ENCODE measurements at regions of chr12 and their contacts with region 1.

Region 1: DNA sequence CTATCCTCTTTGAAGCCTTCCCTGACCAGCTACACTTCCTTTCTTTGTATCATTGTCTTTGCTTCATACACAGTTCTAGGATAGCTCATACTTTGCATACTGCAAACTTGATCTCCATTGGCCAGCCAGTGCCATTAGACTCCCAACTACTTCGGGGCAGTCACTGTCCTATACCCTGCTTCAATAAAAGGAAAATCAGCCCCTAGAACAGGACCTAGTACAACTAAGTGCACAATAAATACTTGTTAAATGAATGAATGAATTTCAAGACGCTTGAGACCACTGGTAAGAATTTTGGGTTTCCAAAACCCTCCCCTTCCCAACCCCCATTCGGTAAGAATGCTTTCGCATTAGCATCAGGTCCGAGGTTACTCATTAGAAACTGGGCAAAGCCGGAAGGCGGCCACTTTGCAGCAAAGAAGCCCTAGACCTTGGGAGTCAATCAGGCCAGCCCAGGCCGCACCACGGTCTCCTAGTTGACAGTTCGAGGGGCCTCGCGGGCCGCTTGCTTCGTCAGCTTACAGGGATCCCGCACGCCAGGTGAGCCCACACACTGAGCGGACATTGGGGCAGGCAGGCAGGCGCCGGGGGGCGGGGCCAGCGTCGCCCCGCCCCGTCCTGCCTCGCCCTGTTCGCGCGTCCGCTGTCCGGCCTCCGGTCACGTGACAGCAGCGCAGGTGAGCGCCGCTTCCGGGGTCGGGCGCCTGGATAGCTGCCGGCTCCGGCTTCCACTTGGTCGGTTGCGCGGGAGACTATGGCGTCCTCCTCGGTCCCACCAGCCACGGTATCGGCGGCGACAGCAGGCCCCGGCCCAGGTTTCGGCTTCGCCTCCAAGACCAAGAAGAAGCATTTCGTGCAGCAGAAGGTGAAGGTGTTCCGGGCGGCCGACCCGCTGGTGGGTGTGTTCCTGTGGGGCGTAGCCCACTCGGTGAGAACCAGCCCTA is at the start of gene PIP4K2C:
- DNase-seq: peak; percentile 28 to 93 (median 74)
- ATAC-seq: peak; percentile 87
- H3K4me3 ChIP-seq: peak within 1 kb of the TSS; percentile 61 to 97
- H3K4me3 Mint-ChIP-seq: peak within 1 kb of the TSS; percentile 85
- H3K27ac ChIP-seq: peak within 1 kb of the TSS; percentile 55 to 79
- H3K27ac Mint-ChIP-seq: peak within 1 kb of the TSS; percentile 83
- H3K4me1 ChIP-seq: peaks cover 23% of the 10 kb centered on the region
- H3K4me1 Mint-ChIP-seq: peaks cover 32% of the 10 kb centered on the region
- H3K27me3 ChIP-seq: peaks cover 0 to 5% of the 10 kb centered on the region in 2 experiments
- H3K27me3 Mint-ChIP-seq: no peaks in the 10 kb centered on the region
- CTCF ChIP-seq: no peak
- total RNA-seq, gene PIP4K2C: 16.4 to 20.1 TPM

Region 2: DNA sequence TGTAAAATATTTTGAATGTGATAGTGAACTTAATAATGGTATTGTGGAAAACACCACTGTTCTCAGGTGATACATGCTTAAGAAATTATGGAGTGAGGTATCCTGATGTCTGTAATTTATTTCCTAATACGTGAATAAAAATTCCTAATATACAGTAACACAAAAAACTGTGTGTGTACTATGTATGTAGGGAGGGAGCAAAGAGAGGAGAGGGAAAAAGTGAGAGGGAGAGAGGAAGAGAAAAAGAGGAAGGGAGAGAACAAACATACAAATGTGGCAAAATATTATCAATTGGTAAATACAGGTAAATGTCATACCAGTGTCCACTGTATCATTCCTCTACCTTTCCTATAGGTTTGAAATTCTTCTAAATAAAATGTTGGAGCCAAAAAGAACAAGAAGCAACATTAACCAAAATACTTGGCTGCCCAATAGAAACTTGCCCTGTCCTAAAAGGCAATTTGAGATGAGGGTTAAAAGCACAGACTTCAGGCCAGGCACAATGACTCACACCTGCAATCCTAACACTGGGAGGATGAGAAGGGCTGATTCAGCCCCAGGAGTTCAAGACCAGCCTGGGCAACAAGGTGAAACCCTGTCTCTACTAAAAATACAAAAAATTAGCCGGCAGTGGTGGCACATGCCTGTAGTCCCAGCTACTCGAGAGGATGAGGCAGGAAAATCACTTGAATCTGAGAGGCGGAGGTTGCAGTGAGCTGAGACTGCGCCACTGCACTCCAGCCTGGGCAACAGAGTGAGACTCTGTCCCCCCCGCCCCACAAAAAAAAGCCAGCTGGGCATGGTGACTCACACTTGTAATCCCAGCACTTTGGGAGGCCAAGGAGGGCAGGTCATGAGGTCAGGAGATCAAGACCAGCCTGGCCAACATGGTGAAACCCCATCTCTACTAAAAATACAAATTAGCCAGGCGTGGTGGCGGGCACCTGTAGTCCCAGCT is 174.5 kb before region 1 on chr12:
- CTCF ChIA-PET with region 1: no interaction called
- POLR2A ChIA-PET with region 1: no interaction called
- intact Hi-C with region 1: no loop called
- DNase-seq: no peak
- ATAC-seq: no peak
- H3K4me3 ChIP-seq: no peak overlapping the region
- H3K4me3 Mint-ChIP-seq: no peak overlapping the region
- H3K27ac ChIP-seq: no peak overlapping the region
- H3K27ac Mint-ChIP-seq: peak overlapping the region; percentile 8
- H3K4me1 ChIP-seq: no peaks in the 10 kb centered on the region
- H3K4me1 Mint-ChIP-seq: peaks cover 52% of the 10 kb centered on the region
- H3K27me3 ChIP-seq: no peaks in the 10 kb centered on the region
- H3K27me3 Mint-ChIP-seq: no peaks in the 10 kb centered on the region
- CTCF ChIP-seq: no peak

Region 3: GRCh38 chr12:57604454-57604991 is 13.7 kb after region 1 on chr12 and contains the start of gene DTX3:
- CTCF ChIA-PET with region 1: interaction called, 36 read pairs
- POLR2A ChIA-PET with region 1: interaction called, 4 read pairs
- intact Hi-C with region 1: loop called in 1 of 2 experiments (anchors 2 kb)
- DNase-seq: peak in 7 of 9 experiments; percentile 33 to 70 (median 51)
- ATAC-seq: peak; percentile 72
- H3K4me3 ChIP-seq: peak within 1 kb of the TSS; percentile 71 to 72
- H3K4me3 Mint-ChIP-seq: peak within 1 kb of the TSS; percentile 90
- H3K27ac ChIP-seq: peak within 1 kb of the TSS; percentile 52 to 73
- H3K27ac Mint-ChIP-seq: peak within 1 kb of the TSS; percentile 86
- H3K4me1 ChIP-seq: peaks cover 32% of the 10 kb centered on the region
- H3K4me1 Mint-ChIP-seq: peaks cover 30% of the 10 kb centered on the region
- H3K27me3 ChIP-seq: no peaks in the 10 kb centered on the region
- H3K27me3 Mint-ChIP-seq: no peaks in the 10 kb centered on the region
- CTCF ChIP-seq: no peak
- total RNA-seq, gene DTX3: 33.2 to 33.7 TPM

Measured in CD8-positive, alpha-beta T cell (primary cell).